Uterus (tissue), 4 donors: ENCODE measurements at regions of chr5 and their contacts with region 1.

Region 1: GRCh38 chr5:10719965-10720364 is 41.1 kb downstream of the DAP start:
- DNase-seq: no peak
- H3K4me3 ChIP-seq: no peak overlapping the region
- H3K27ac ChIP-seq: no peak overlapping the region
- H3K4me1 ChIP-seq: no peaks in the 10 kb centered on the region
- H3K27me3 ChIP-seq: no peaks in the 10 kb centered on the region
- CTCF ChIP-seq: no peak
- POLR2A ChIP-seq: no peak

Region 2: DNA sequence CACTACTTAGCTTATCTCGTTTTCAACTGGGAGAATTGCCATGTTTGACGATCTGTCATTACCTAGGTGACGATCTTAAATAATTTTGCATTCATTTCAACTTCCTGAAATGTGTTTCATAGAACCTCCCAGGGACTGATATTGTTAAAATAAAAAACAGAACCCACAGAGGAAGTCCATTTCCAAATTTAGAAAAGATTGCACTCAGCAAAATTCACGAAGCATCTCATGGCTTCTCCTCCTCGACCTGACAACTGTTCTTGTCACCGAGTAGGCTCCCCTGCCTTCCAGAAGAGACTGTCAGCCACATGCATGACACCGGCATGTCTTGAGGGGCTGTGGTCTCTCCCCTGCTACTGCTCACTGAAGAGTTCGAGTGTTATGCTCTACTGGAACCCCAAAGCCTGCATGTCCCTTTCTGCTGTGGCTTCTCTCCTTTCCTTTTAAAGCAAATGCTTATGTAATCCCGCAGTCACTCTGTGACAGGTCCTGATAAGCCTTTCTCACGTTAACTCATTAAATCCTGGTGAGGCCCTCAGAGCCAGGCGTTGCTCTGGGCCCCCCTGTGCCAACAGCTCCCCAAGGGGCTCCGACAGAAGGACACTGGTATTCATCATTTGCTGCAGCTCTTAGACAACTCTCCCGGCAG is 182.9 kb before region 1 on chr5:
- intact Hi-C with region 1: no loop called
- DNase-seq: no peak
- H3K4me3 ChIP-seq: no peak overlapping the region
- H3K27ac ChIP-seq: peak overlapping the region in 1 of 2 donors; percentile 45
- H3K4me1 ChIP-seq: peaks cover 0 to 23% of the 10 kb centered on the region in 2 donors
- H3K27me3 ChIP-seq: no peaks in the 10 kb centered on the region
- CTCF ChIP-seq: no peak
- POLR2A ChIP-seq: no peak

Region 3: DNA sequence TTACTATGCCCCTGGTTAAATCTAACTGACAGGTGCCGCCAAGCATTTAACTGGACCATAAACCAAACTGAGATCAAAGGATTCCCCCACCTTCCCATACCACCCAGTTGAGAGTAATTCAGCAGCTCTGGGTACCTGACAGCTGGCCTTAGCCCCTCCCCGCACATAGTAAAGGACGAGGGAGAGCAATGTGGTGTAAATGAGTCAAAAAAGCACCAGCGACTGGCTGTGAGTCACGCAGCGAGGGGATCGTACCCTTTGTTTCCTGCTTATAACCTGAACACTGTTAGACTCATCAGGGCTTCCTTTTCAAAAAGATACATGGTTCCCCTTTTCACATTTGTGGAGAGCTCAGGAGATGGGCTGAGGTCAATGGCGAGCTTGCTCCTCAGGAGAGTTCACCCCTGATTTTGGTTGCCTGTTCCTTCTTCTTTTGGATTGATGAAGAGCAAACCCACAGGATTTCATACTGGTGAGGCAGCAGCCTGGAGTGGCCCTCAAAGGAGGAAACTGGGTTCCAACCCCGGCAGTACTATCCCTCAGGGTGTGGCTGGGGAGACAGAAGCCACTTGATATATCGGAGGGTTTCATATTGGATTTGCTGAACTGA is 84.6 kb before region 1 on chr5:
- intact Hi-C with region 1: no loop called
- DNase-seq: no peak
- H3K4me3 ChIP-seq: no peak overlapping the region
- H3K27ac ChIP-seq: no peak overlapping the region
- H3K4me1 ChIP-seq: no peaks in the 10 kb centered on the region
- H3K27me3 ChIP-seq: no peaks in the 10 kb centered on the region
- CTCF ChIP-seq: no peak
- POLR2A ChIP-seq: no peak

Region 4: GRCh38 chr5:10761166-10761932 is 41.4 kb after region 1 on chr5 and contains the start of gene DAP:
- intact Hi-C with region 1: loop called (anchors 2 kb)
- DNase-seq: peak; percentile 87 to 91
- H3K4me3 ChIP-seq: peak within 1 kb of the TSS; percentile 44 to 94
- H3K27ac ChIP-seq: peak within 1 kb of the TSS; percentile 97 to 99
- H3K4me1 ChIP-seq: peaks cover 0 to 13% of the 10 kb centered on the region in 2 donors
- H3K27me3 ChIP-seq: no peaks in the 10 kb centered on the region
- CTCF ChIP-seq: no peak
- POLR2A ChIP-seq: peak; percentile 79 to 94
- total RNA-seq, gene DAP: 38.2 to 83.9 (median 50.0) TPM

Region 5: DNA sequence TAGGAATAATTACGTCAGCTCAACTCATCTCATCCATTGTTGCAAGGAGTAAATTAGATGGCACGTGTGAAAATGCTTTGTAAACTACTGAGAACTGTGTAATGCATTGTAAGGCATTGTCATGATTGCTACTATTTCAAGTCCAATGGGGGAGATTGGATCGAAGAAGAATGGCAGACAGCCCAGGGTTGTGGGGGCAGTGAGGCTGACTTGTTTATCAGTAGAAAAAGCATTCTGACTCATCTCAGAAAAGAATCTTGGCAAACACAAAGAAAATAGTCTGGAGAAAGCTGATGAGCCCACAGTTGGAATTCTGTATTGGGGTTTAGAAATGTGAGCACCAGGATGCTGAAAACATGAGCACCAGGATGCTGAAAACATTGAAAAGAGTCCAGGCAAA is 69.1 kb after region 1 on chr5:
- intact Hi-C with region 1: no loop called
- DNase-seq: peak; percentile 69 to 85
- H3K4me3 ChIP-seq: no peak overlapping the region
- H3K27ac ChIP-seq: peak overlapping the region; percentile 71 to 83
- H3K4me1 ChIP-seq: no peaks in the 10 kb centered on the region
- H3K27me3 ChIP-seq: no peaks in the 10 kb centered on the region
- CTCF ChIP-seq: no peak
- POLR2A ChIP-seq: no peak

Region 6: DNA sequence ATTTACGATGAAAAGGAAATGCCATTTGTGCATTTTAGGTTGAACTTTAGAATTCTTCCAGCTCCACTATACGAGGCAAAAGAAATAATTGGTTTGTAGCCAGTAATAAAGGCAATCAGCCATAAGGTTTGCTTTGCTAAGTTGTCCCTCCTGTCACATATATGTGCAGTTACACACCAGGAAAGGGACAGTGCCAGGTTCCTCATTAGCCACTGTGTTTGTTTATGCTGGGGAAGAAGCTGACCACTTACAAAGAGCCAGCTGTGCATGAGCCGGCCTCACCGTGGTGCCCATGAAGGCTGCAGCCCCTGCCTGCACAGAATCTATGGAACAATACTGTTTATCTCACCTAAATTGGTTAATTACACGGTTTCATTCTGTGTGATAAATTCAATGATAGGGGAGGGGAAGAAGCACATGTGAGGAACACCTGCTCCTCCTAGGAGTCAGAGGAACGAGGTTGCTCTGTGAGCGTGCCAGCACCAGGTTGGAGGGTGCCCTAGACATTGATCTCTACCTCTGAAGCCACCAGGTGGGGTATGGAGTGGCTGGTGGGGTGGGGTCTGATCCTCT is 214.9 kb after region 1 on chr5:
- intact Hi-C with region 1: no loop called
- DNase-seq: no peak
- H3K4me3 ChIP-seq: no peak overlapping the region
- H3K27ac ChIP-seq: no peak overlapping the region
- H3K4me1 ChIP-seq: no peaks in the 10 kb centered on the region
- H3K27me3 ChIP-seq: no peaks in the 10 kb centered on the region
- CTCF ChIP-seq: no peak
- POLR2A ChIP-seq: no peak